H1 (cell line): ENCODE measurements at regions of chr1 and their contacts with region 1.

Region 1: DNA sequence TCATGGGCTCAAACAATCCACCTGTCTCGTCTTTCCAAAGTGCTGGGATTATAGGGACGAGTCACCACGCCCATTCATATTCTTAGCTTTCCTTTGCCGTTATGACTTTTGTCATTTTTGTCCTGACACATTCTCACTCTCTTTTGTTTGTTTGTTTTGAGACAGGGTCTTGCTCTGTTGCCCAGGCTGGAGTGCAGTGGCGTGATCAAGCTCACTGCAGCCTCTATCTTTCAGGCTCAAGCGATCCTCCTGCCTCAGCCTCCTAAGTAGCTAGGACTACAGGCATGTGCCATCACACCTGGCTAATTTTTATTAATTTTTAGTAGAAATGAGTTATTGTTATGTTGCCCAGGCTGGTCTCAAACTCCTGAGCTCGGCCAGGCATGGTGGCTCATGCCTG is 11.8 kb upstream of the MED18 start:
- DNase-seq: no peak
- H3K4me3 ChIP-seq: no peak overlapping the region
- H3K27ac ChIP-seq: no peak overlapping the region
- H3K4me1 ChIP-seq: no peaks in the 10 kb centered on the region
- H3K27me3 ChIP-seq: no peaks in the 10 kb centered on the region
- CTCF ChIP-seq: no peak
- EP300 ChIP-seq: no peak
- POLR2A ChIP-seq: no peak
- RAD21 ChIP-seq: no peak

Region 2: DNA sequence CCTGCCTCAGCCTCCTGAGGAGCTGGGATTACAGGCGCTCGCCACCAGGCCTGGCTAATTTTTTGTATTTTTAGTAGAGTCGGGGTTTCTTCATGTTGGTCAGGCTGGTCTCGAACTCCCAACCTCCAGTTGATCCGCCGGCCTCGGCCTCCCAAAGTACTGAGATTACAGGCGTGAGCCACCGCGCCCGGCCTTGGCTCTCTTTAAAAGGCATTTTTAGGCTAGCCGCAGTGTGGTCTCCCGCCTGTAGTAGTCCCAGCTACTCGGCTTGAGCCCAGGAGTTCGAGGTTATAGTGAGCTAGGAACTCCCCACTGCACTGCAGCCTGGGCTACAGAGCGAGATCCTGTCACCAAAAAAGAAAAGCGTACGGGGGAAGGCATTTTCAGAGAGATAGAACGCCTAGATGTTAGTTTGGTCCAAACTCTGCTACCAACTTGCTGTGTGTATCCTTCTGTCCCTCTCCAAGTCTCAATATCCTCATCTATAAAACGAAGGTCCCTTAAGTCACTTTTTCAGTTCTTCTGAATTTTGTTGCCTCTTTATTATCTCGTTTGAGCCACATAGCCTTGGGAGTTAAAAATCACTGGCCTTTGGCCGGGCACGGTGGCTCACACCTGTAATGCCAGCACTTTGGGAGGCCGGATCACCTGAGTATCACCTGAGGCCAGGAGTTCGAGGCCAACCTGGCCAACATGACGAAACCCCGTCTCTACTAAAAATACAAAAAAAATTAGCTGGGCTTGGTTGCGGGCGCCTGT is 12.6 kb after region 1 on chr1:
- CTCF ChIA-PET with region 1: interaction called, 14 read pairs
- POLR2A ChIA-PET with region 1: interaction called, 9 read pairs
- DNase-seq: peak in 1 of 2 experiments; percentile 56
- H3K4me3 ChIP-seq: peak overlapping the region; percentile 49 to 74 (median 72)
- H3K27ac ChIP-seq: peak overlapping the region; percentile 55; the same call in 1 of the 2 replicates
- H3K4me1 ChIP-seq: no peaks in the 10 kb centered on the region; a peak in 1 of 7 replicates
- H3K27me3 ChIP-seq: no peaks in the 10 kb centered on the region; a peak in 1 of 7 replicates
- CTCF ChIP-seq: peak in 2 of 3 experiments; percentile 6 to 22; a peak in 2 of 4 replicates
- EP300 ChIP-seq: no peak
- POLR2A ChIP-seq: no peak; a peak in 1 of 3 replicates
- RAD21 ChIP-seq: peak in 1 of 2 experiments; percentile 17; a peak in 1 of 4 replicates

Region 3: DNA sequence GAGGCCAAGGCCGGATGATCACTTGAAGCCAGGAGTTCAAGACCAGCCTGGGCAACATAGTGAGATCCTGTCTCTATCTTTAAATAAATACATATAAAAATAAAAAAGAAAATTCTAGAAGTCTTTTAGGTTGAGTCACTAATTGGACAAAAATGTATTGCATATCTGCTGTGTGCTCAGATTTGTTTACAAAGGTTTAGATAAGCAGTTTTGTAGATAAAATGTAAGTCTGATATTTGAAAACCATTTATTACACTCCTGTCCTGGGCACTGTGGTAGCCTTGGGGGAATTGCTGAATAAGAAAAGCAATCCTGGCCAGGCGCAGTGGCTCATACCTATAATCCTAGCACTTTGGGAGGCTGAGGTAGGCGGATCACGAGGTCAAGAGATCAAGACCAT is 363.1 kb after region 1 on chr1:
- CTCF ChIA-PET with region 1: no interaction called
- POLR2A ChIA-PET with region 1: no interaction called
- DNase-seq: no peak
- H3K4me3 ChIP-seq: no peak overlapping the region
- H3K27ac ChIP-seq: no peak overlapping the region
- H3K4me1 ChIP-seq: no peaks in the 10 kb centered on the region
- H3K27me3 ChIP-seq: no peaks in the 10 kb centered on the region
- CTCF ChIP-seq: no peak
- EP300 ChIP-seq: no peak
- POLR2A ChIP-seq: no peak
- RAD21 ChIP-seq: no peak